Panc1 (cell line): ENCODE measurements at regions of chr2 and their contacts with region 1.

Region 1: GRCh38 chr2:62340994-62341484 is 145.1 kb downstream of the B3GNT2 start:
- DNase-seq: no peak
- ATAC-seq: no peak
- H3K4me3 ChIP-seq: no peak overlapping the region
- H3K27ac ChIP-seq: no peak overlapping the region
- H3K4me1 ChIP-seq: no peaks in the 10 kb centered on the region
- H3K27me3 ChIP-seq: no peaks in the 10 kb centered on the region
- CTCF ChIP-seq: no peak

Region 2: DNA sequence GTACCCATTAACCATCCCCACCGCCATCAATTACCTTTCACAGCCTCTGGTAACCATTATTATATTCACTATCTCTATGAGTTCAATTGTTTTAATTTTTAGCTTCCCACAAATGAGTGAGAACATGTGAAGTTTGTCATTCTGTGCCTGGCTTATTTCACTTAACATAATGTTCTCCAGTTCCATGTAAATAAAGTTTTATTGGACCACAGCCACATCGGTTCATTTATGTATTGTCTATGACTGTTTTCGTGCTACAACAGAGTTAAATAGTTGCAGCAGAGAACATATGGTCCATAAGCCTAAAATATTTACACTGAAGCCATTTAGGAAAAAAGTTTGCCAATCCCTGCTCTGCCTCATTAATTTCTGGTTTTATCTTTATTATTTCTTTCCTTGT is 825.9 kb after region 1 on chr2:
- CTCF ChIA-PET with region 1: no interaction called
- POLR2A ChIA-PET with region 1: interaction called, 16 read pairs
- in situ Hi-C with region 1: no loop called
- intact Hi-C with region 1: no loop called
- DNase-seq: no peak
- ATAC-seq: no peak
- H3K4me3 ChIP-seq: no peak overlapping the region
- H3K27ac ChIP-seq: no peak overlapping the region
- H3K4me1 ChIP-seq: no peaks in the 10 kb centered on the region
- H3K27me3 ChIP-seq: no peaks in the 10 kb centered on the region
- CTCF ChIP-seq: no peak